H1 (cell line): ENCODE measurements at regions of chr4 and their contacts with region 1.

Region 1: DNA sequence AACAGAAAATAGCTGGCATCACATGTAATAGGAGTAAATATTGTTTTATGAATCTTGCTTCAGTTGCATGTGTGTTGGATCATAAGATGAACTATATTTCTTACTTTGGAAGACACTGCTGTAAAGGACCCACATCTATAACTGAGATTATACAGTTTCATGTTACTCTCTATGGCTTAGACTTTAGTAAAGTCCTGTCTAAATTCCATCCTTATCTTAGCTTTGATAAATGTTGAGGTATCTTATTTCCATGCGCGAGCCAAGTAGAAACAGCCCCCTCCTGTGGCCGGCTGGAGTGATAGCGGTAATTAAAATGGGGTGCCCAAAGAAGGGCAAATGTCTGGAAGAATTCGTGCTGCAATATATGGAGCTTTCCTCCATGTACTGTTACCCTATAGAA is 43.0 kb downstream of the CCDC158 start:
- DNase-seq: peak in 1 of 2 experiments; percentile 63
- H3K4me3 ChIP-seq: no peak overlapping the region
- H3K27ac ChIP-seq: no peak overlapping the region
- H3K4me1 ChIP-seq: peaks cover 3 to 14% (median 8%) of the 10 kb centered on the region in 4 experiments
- H3K27me3 ChIP-seq: no peaks in the 10 kb centered on the region
- CTCF ChIP-seq: peak; percentile 69 to 72 (median 71)
- EP300 ChIP-seq: no peak
- POLR2A ChIP-seq: no peak
- RAD21 ChIP-seq: peak; percentile 79 to 85

Region 2: GRCh38 chr4:76198411-76199237 is 179.3 kb before region 1 on chr4:
- CTCF ChIA-PET with region 1: interaction called, 15 read pairs
- POLR2A ChIA-PET with region 1: no interaction called
- DNase-seq: no peak
- H3K4me3 ChIP-seq: no peak overlapping the region
- H3K27ac ChIP-seq: no peak overlapping the region
- H3K4me1 ChIP-seq: peaks cover 0 to 5% (median 0%) of the 10 kb centered on the region in 4 experiments; a peak in 1 of 7 replicates
- H3K27me3 ChIP-seq: no peaks in the 10 kb centered on the region
- CTCF ChIP-seq: no peak
- EP300 ChIP-seq: no peak
- POLR2A ChIP-seq: no peak
- RAD21 ChIP-seq: no peak

Region 3: GRCh38 chr4:76270244-76271175 is 107.4 kb before region 1 on chr4:
- CTCF ChIA-PET with region 1: interaction called, 12 read pairs
- POLR2A ChIA-PET with region 1: no interaction called
- DNase-seq: no peak
- H3K4me3 ChIP-seq: no peak overlapping the region
- H3K27ac ChIP-seq: no peak overlapping the region
- H3K4me1 ChIP-seq: no peaks in the 10 kb centered on the region
- H3K27me3 ChIP-seq: peaks cover 0 to 2% (median 0%) of the 10 kb centered on the region in 4 experiments; a peak in 1 of 7 replicates
- CTCF ChIP-seq: no peak
- EP300 ChIP-seq: no peak
- POLR2A ChIP-seq: no peak
- RAD21 ChIP-seq: no peak

Region 4: GRCh38 chr4:76305971-76306881 is 71.7 kb before region 1 on chr4 and contains the start of gene STBD1:
- CTCF ChIA-PET with region 1: interaction called, 35 read pairs
- POLR2A ChIA-PET with region 1: interaction called, 3 read pairs
- DNase-seq: peak; percentile 47 to 90
- H3K4me3 ChIP-seq: peak within 1 kb of the TSS; percentile 60 to 81 (median 72)
- H3K27ac ChIP-seq: no peak within 1 kb of the TSS
- H3K4me1 ChIP-seq: no peaks in the 10 kb centered on the region; a peak in 1 of 7 replicates
- H3K27me3 ChIP-seq: peaks cover 2 to 17% (median 11%) of the 10 kb centered on the region in 4 experiments
- CTCF ChIP-seq: no peak
- EP300 ChIP-seq: no peak
- POLR2A ChIP-seq: peak in 1 of 2 experiments; percentile 34; a peak in 1 of 3 replicates
- RAD21 ChIP-seq: no peak
- total RNA-seq, gene STBD1: 1.4 and 1.7 TPM in 2 replicates

Region 5: DNA sequence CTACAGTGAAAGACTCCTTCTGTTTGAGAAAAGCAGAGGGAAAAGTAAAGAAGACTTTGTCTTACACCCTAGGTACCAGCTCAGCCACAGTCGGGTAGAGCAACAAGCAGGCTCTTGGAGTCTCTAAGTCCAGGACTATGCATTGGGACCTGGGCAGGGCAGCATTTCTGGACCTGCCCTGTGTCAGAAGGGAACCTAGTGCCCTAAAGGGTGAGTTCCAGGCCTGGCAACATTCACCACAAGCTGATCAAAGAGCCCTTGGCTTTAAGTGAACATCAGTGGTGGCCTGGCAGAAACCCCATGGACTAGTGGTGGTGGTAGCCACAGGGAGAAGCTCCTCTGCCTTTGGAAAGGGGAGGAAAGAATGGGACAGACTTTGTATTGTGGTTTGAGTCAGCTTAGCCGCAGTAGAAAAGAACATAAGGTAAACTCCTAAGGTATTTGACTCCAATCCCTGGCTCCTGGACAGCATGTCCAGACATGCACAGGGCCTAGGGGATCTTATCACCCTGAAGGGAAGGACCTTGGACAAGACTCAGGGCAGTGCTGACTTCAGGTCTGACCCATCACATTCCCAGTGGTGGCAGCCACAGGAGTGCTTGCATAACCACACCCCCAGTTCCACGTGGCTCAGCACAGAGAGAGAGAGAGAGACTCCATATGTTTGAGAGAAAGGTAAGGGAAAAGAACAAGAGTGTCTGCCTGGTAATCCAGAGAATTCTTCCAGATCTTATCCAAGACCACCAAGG is 10.4 kb after region 1 on chr4:
- CTCF ChIA-PET with region 1: interaction called, 31 read pairs
- POLR2A ChIA-PET with region 1: interaction called, 3 read pairs
- DNase-seq: no peak
- H3K4me3 ChIP-seq: no peak overlapping the region
- H3K27ac ChIP-seq: no peak overlapping the region
- H3K4me1 ChIP-seq: peaks cover 0 to 5% (median 3%) of the 10 kb centered on the region in 4 experiments; a peak in 4 of 7 replicates
- H3K27me3 ChIP-seq: no peaks in the 10 kb centered on the region
- CTCF ChIP-seq: no peak
- EP300 ChIP-seq: no peak
- POLR2A ChIP-seq: no peak
- RAD21 ChIP-seq: no peak

Region 6: DNA sequence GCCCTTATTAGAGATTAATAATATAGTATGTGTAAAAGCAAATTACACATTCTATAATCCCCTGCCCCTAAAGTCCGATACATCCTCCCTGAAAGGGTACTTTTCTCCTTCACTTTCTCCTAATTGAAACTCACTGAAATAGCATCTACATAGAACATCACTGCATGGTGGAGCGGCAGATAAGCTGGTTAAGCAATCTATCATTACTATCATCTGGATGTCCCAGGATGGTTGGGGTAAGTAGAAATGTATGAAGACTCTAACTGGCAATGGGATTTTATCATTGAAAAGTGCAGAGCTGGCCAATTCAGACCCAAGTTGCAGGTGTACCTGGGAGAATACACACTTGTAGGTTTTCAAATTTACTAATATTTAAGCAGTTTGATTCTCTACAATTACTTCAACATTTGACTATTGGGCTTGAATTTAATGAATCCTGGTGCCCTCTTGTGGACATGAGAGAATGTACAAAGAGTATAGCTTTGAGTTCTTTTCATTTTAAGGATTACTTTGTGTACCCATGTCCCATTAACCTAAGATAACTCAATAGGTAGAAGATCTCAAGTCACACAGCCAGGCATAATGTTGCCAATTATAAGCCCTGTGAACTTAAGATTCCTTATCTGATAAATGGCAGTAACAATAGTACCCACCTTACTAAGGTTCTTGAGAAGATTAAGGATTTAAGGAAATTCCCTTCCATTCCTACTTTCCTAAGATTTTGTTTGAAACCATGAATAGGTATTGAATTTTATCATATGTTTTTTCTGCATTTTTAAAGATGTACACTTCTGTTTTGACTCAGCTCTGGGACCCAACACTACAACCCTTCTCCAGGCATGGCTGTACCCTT is 126.9 kb after region 1 on chr4:
- CTCF ChIA-PET with region 1: interaction called, 11 read pairs
- POLR2A ChIA-PET with region 1: no interaction called
- DNase-seq: no peak
- H3K4me3 ChIP-seq: no peak overlapping the region
- H3K27ac ChIP-seq: no peak overlapping the region
- H3K4me1 ChIP-seq: no peaks in the 10 kb centered on the region
- H3K27me3 ChIP-seq: no peaks in the 10 kb centered on the region
- CTCF ChIP-seq: peak in 2 of 3 experiments; percentile 38 to 57; a peak in 2 of 4 replicates
- EP300 ChIP-seq: no peak
- POLR2A ChIP-seq: no peak
- RAD21 ChIP-seq: peak; percentile 70 to 73